ENCODE measurements at regions of chr5 and their contacts with region 1.

Region 1: GRCh38 chr5:175814691-175815090 is 56.7 kb upstream of the CPLX2 start:
- DNase-seq: no peak
- H3K4me3 ChIP-seq: no peak overlapping the region
- CTCF ChIP-seq: no peak

Region 2: DNA sequence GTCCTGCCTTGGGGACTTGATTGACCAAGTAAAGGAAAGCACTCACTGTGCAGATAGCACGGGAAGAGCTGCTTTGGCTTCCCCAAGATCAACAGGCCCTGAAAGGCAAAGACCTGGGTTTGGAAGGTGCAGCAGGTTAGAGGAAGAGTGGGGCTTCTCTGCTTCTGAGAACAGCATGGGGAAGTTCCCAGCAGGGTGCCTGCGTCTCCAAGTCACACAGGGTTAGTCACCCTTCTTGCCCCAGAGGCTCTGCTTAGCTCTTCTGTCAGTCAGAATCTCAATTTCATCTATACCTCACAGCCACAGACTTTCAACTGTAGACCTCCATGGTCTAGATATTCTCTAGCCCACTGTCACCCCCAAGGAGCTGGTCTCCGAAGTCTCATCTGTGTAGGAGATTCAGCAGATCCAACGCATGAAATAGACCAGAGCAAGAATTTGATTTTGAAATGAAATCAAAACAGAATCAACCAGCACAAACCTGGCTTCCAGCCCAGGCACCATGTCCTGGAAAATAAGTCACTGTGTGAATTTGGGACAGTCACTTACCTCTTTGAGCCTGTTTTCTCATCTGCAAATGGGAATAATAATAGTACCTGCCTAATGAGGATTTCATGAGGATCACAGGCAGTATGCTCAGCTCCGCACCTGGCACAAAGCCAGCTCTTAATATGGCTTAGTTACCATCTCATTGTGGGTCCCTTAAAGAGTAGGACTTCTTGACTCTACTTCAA is 272.3 kb before region 1 on chr5:
- CTCF ChIA-PET with region 1: no interaction called
- POLR2A ChIA-PET with region 1: no interaction called
- DNase-seq: no peak
- H3K4me3 ChIP-seq: no peak overlapping the region
- CTCF ChIP-seq: no peak

Region 3: GRCh38 chr5:175729829-175730277 is 84.8 kb before region 1 on chr5:
- CTCF ChIA-PET with region 1: interaction called, 10 read pairs
- POLR2A ChIA-PET with region 1: no interaction called
- DNase-seq: peak; percentile 29
- H3K4me3 ChIP-seq: no peak overlapping the region
- CTCF ChIP-seq: peak; percentile 97

Region 4: DNA sequence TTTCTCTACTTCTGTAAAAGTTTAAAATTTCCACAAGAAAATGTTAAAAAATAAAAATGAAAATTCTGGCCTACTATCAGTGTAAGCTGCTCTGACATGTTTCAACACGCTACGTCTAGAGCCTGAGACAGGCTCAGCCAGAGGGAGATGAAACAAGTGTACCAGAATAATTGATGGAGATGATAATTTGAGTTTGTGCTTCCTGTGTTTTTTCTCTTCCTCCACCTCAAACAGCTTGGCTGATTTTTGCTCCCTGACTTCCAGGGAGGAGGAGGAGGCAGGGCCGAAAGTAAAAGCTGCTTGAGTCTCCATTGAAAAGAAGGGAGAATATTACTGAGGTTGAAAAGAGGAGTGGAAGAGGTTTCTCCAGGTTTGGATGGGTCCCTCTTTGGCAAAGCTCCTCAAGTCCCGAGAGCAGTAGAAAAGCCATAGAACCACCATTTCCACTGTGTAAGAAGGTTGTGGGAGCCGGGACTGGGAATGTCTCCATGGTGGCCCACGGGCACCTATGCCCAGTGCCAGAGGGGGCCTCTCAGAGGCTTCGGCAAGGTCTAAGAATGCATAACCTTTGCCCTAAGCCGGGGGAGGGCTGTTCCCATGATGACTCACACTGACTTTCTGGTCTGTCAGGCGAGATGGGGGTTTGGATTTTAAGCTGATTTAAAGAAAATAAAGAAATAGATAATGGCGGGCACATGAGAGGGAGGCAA is 61.7 kb before region 1 on chr5:
- CTCF ChIA-PET with region 1: no interaction called
- POLR2A ChIA-PET with region 1: no interaction called
- DNase-seq: no peak
- H3K4me3 ChIP-seq: no peak overlapping the region
- CTCF ChIP-seq: no peak

Region 5: DNA sequence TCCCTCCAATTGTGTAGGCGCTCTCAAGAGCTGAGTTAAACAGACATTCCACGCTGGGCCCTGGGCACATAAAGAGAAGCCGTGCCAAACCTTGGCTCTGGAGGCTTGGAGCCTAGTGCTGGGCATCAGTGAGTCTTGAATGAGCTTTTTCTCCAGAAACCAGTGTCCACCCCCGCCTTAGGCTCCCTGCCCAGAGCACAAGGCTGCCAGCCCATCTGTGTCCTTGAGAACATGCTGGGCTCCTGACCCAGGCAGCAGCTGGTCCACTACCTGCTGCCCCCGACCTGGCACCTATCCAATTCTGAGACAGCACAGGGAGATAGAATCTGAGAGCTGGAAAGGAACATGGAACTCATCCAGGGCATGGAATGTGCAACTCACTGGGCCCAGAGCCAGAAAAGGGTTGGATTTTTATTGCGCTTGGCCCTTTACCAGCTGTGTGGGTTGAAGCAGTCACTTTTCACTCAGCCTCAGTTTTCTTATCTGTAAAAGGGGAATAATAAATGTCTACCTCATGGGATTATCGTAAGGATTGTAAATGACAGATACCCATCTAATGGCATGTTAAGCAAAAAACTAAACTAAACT is 35.6 kb before region 1 on chr5:
- CTCF ChIA-PET with region 1: no interaction called
- POLR2A ChIA-PET with region 1: no interaction called
- DNase-seq: no peak
- H3K4me3 ChIP-seq: no peak overlapping the region
- CTCF ChIP-seq: no peak

Region 6: GRCh38 chr5:175873088-175873454 is 58.4 kb after region 1 on chr5:
- CTCF ChIA-PET with region 1: no interaction called
- POLR2A ChIA-PET with region 1: no interaction called
- DNase-seq: no peak
- H3K4me3 ChIP-seq: no peak overlapping the region
- CTCF ChIP-seq: peak; percentile 14

Measured in AG04449 (cell line).